ENCODE measurements at regions of chr1 and their contacts with region 1.

Region 1: GRCh38 chr1:113146242-113147072 is 73.5 kb downstream of the LRIG2 start:
- DNase-seq: no peak
- H3K4me3 ChIP-seq: no peak overlapping the region
- H3K27ac ChIP-seq: no peak overlapping the region
- H3K27me3 ChIP-seq: no peaks in the 10 kb centered on the region
- CTCF ChIP-seq: no peak

Region 2: DNA sequence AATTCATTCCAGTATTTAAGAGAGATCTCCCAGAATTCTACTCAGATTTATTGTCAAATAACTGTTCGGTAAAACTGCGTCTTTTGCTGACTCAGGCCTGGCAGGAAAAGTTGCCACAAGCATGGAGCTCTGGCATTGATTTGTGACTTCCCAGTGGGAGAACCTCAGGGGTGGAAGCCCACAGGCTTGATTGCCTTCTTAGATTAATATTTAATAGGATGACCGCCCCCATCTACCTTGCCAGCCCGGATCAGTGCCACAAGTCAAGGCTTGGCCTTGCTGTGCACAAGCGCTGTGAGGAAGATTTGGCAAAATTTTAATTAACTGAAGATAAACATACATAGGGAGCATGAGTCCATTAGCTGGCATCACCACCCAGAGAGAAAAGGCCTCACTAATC is 20.0 kb after region 1 on chr1:
- CTCF ChIA-PET with region 1: no interaction called
- POLR2A ChIA-PET with region 1: interaction called, 12 read pairs
- DNase-seq: no peak
- H3K4me3 ChIP-seq: no peak overlapping the region
- H3K27ac ChIP-seq: no peak overlapping the region
- H3K27me3 ChIP-seq: peaks cover 3% of the 10 kb centered on the region
- CTCF ChIP-seq: no peak

Region 3: DNA sequence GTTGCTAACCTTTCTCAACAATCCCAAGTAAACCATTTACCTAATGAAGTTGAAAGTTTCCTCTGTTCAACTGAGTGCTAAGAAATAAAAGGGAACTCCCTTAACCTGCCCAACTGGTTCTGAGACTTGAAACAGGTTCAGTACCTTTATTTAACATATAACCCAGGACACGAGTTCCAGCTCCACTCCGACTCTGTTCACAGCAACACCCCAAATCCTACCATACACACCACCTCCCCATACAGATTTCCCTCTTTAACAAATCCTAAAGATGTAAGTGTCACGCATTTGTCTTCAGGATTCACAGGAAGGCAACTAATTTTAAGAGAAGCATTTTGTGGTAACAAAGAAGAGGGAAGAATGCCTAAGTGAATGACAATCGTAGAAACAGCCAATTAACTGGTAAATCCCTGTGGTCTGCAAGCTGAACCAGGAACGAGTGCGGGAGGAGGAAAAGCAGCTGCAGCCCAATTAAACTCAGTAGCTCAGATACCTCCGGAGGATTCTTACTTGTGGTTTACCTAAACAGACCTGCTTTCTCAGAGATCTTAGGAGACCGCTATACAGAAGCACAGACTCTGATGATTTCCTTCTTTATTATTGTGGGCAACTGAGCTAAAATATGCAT is 109.4 kb after region 1 on chr1:
- CTCF ChIA-PET with region 1: no interaction called
- POLR2A ChIA-PET with region 1: no interaction called
- DNase-seq: no peak
- H3K4me3 ChIP-seq: no peak overlapping the region
- H3K27ac ChIP-seq: no peak overlapping the region
- H3K27me3 ChIP-seq: peaks cover 17% of the 10 kb centered on the region
- CTCF ChIP-seq: no peak

Measured in AG04450 (cell line).